CD8-positive, alpha-beta T cell (primary cell): ENCODE measurements at regions of chr9 and their contacts with region 1.

Region 1: DNA sequence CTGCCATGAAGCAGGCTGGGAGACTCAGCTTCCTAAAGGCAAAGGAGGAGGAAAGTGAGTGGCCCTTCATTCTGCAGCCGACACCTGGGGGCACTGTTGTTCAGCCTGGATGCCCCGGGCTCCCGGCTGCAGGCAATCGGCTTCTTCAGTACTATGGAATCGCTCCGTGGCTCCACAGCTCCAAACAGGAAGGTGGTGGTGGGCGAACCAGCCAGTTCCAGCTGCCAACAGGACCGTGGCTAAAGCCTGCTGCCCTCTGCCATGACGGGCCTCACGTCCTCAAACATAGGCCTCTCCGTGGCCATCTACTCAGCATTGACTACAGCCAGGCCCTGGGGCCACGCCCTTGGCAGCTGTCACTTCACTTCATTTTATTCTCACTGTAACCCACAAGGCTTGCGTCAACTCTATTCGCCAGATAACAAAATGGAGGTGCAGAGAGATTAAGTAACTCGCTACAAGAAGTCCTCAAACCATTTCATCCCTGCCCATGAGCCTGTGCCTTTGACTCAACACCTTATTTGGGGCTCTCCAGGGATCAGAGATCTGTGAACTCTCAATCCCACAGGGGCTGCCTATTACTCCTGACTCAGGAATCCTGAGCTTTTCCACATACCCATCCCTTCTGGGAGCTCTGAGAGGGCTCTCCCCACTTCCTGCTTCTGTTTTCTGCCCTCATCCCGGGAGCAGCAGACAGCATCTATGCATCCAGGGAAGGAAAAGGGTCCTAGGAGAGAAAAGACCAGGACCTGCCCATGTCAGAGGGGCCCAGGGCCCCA is 38.0 kb downstream of the PAX5 start:
- DNase-seq: peak; percentile 20 to 73 (median 53)
- ATAC-seq: peak; percentile 70
- H3K4me3 ChIP-seq: peak overlapping the region in 1 of 2 experiments; percentile 32
- H3K4me3 Mint-ChIP-seq: peak overlapping the region; percentile 57
- H3K27ac ChIP-seq: no peak overlapping the region
- H3K27ac Mint-ChIP-seq: no peak overlapping the region
- H3K4me1 ChIP-seq: no peaks in the 10 kb centered on the region
- H3K4me1 Mint-ChIP-seq: peaks cover 3% of the 10 kb centered on the region
- H3K27me3 ChIP-seq: peaks cover 0 to 4% of the 10 kb centered on the region in 2 experiments
- H3K27me3 Mint-ChIP-seq: peaks cover 31% of the 10 kb centered on the region
- CTCF ChIP-seq: peak; percentile 68

Region 2: GRCh38 chr9:37197158-37198038 is 201.3 kb after region 1 on chr9:
- CTCF ChIA-PET with region 1: no interaction called
- POLR2A ChIA-PET with region 1: no interaction called
- intact Hi-C with region 1: loop called in 1 of 2 experiments (anchors 10 kb)
- DNase-seq: peak in 1 of 9 experiments; percentile 18
- ATAC-seq: peak; percentile 11
- H3K4me3 ChIP-seq: no peak overlapping the region
- H3K4me3 Mint-ChIP-seq: no peak overlapping the region
- H3K27ac ChIP-seq: no peak overlapping the region
- H3K27ac Mint-ChIP-seq: peak overlapping the region; percentile 76
- H3K4me1 ChIP-seq: peaks cover 16% of the 10 kb centered on the region
- H3K4me1 Mint-ChIP-seq: peaks cover 50% of the 10 kb centered on the region
- H3K27me3 ChIP-seq: no peaks in the 10 kb centered on the region
- H3K27me3 Mint-ChIP-seq: no peaks in the 10 kb centered on the region
- CTCF ChIP-seq: no peak

Region 3: DNA sequence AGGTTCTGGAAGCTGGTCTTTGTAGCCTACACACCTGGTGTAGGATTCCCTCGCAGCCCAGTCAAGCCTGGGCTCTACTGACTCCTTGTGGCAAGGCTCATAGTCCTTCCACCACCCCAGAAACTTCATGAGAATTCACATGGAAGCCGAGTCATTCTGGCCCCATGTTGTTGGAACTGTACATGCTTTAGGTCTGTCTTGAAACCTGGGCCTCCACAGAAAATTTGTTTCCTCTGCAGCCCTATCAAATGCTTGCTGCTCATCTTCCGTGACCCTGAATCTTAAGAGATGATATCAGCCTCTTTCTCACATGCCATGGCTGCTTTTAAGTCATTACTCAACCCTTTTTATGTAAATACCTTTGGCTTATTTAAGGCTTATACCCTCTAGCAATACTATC is 313.0 kb after region 1 on chr9:
- CTCF ChIA-PET with region 1: interaction called, 8 read pairs
- POLR2A ChIA-PET with region 1: no interaction called
- intact Hi-C with region 1: loop called (anchors 1 kb)
- DNase-seq: peak in 3 of 9 experiments; percentile 8 to 38 (median 24)
- ATAC-seq: no peak
- H3K4me3 ChIP-seq: no peak overlapping the region
- H3K4me3 Mint-ChIP-seq: no peak overlapping the region
- H3K27ac ChIP-seq: no peak overlapping the region
- H3K27ac Mint-ChIP-seq: no peak overlapping the region
- H3K4me1 ChIP-seq: no peaks in the 10 kb centered on the region
- H3K4me1 Mint-ChIP-seq: peaks cover 8% of the 10 kb centered on the region
- H3K27me3 ChIP-seq: no peaks in the 10 kb centered on the region
- H3K27me3 Mint-ChIP-seq: no peaks in the 10 kb centered on the region
- CTCF ChIP-seq: no peak

Region 4: DNA sequence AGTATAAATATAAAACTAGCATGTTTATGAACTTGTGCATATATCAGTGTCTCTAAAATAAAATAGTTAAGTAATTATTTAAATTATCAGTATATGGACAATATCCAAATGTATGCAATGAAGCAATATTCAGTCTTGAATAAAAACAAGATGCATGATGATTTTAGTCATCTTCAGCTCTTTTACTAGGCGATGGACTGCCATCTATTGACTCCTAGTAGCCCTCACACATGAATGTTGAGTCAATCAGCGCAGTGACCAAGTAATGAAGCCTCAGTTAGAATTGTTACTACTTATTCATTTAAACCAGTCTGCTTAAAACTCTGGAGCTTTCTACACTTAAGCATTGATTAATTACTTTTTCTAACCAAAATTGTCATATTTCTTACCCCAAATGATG is 333.5 kb after region 1 on chr9:
- CTCF ChIA-PET with region 1: interaction called, 17 read pairs
- POLR2A ChIA-PET with region 1: no interaction called
- intact Hi-C with region 1: loop called (anchors 1 to 2 kb)
- DNase-seq: peak in 2 of 9 experiments; percentile 40 to 58
- ATAC-seq: no peak
- H3K4me3 ChIP-seq: no peak overlapping the region
- H3K4me3 Mint-ChIP-seq: no peak overlapping the region
- H3K27ac ChIP-seq: no peak overlapping the region
- H3K27ac Mint-ChIP-seq: no peak overlapping the region
- H3K4me1 ChIP-seq: no peaks in the 10 kb centered on the region
- H3K4me1 Mint-ChIP-seq: peaks cover 3% of the 10 kb centered on the region
- H3K27me3 ChIP-seq: no peaks in the 10 kb centered on the region
- H3K27me3 Mint-ChIP-seq: no peaks in the 10 kb centered on the region
- CTCF ChIP-seq: peak; percentile 47

Region 5: GRCh38 chr9:37364751-37365360 is 368.7 kb after region 1 on chr9:
- CTCF ChIA-PET with region 1: interaction called, 13 read pairs
- POLR2A ChIA-PET with region 1: no interaction called
- intact Hi-C with region 1: loop called in 1 of 2 experiments (anchors 10 kb)
- DNase-seq: peak in 3 of 9 experiments; percentile 13 to 35 (median 30)
- ATAC-seq: no peak
- H3K4me3 ChIP-seq: no peak overlapping the region
- H3K4me3 Mint-ChIP-seq: no peak overlapping the region
- H3K27ac ChIP-seq: no peak overlapping the region
- H3K27ac Mint-ChIP-seq: no peak overlapping the region
- H3K4me1 ChIP-seq: no peaks in the 10 kb centered on the region
- H3K4me1 Mint-ChIP-seq: no peaks in the 10 kb centered on the region
- H3K27me3 ChIP-seq: no peaks in the 10 kb centered on the region
- H3K27me3 Mint-ChIP-seq: no peaks in the 10 kb centered on the region
- CTCF ChIP-seq: no peak

Region 6: GRCh38 chr9:37390759-37391158 is 394.6 kb after region 1 on chr9:
- CTCF ChIA-PET with region 1: interaction called, 4 read pairs
- POLR2A ChIA-PET with region 1: no interaction called
- intact Hi-C with region 1: loop called in 1 of 2 experiments (anchors 5 kb)
- DNase-seq: peak in 4 of 9 experiments; percentile 15 to 51 (median 32)
- ATAC-seq: no peak
- H3K4me3 ChIP-seq: no peak overlapping the region
- H3K4me3 Mint-ChIP-seq: no peak overlapping the region
- H3K27ac ChIP-seq: no peak overlapping the region
- H3K27ac Mint-ChIP-seq: no peak overlapping the region
- H3K4me1 ChIP-seq: no peaks in the 10 kb centered on the region
- H3K4me1 Mint-ChIP-seq: peaks cover 3% of the 10 kb centered on the region
- H3K27me3 ChIP-seq: no peaks in the 10 kb centered on the region
- H3K27me3 Mint-ChIP-seq: no peaks in the 10 kb centered on the region
- CTCF ChIP-seq: peak; percentile 18

Region 7: GRCh38 chr9:37508834-37509206 is 512.7 kb after region 1 on chr9:
- CTCF ChIA-PET with region 1: interaction called, 4 read pairs
- POLR2A ChIA-PET with region 1: no interaction called
- intact Hi-C with region 1: loop called in 1 of 2 experiments (anchors 5 kb)
- DNase-seq: peak in 2 of 9 experiments; percentile 35 to 41
- ATAC-seq: no peak
- H3K4me3 ChIP-seq: no peak overlapping the region
- H3K4me3 Mint-ChIP-seq: no peak overlapping the region
- H3K27ac ChIP-seq: no peak overlapping the region
- H3K27ac Mint-ChIP-seq: peak overlapping the region; percentile 24
- H3K4me1 ChIP-seq: no peaks in the 10 kb centered on the region
- H3K4me1 Mint-ChIP-seq: peaks cover 12% of the 10 kb centered on the region
- H3K27me3 ChIP-seq: no peaks in the 10 kb centered on the region
- H3K27me3 Mint-ChIP-seq: no peaks in the 10 kb centered on the region
- CTCF ChIP-seq: no peak